ENCODE measurements at regions of chr11 and their contacts with region 1.

Region 1: GRCh38 chr11:117327567-117328374 is at the start of gene CEP164:
- DNase-seq: peak; percentile 97
- H3K4me3 Mint-ChIP-seq: no peak within 1 kb of the TSS
- H3K27ac Mint-ChIP-seq: no peak within 1 kb of the TSS
- H3K4me1 Mint-ChIP-seq: peaks cover 7% of the 10 kb centered on the region
- H3K27me3 Mint-ChIP-seq: no peaks in the 10 kb centered on the region
- CTCF ChIP-seq: no peak
- total RNA-seq, gene CEP164: 47.4 and 49.9 TPM in 2 replicates

Region 2: DNA sequence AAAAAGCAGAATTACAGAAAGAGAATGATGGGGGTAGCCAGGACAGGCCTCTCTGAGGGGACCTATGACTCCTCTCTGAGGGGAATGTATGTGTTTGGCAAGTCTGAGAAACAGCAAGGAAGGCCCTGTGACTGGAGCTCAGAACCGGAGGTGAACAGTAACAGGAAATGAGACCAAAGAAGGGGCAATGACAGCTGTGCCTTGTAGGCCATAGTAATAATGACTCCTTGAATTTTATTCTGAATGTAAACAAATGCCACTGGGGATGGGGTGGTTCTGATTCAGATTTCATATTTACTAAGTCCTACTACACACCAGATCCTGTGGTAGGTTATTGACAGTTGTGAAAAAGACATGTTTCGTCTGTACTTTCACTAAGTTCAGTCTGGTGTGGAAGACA is 437.6 kb before region 1 on chr11:
- CTCF ChIA-PET with region 1: no interaction called
- POLR2A ChIA-PET with region 1: no interaction called
- intact Hi-C with region 1: no loop called
- DNase-seq: no peak
- H3K4me3 Mint-ChIP-seq: no peak overlapping the region
- H3K27ac Mint-ChIP-seq: no peak overlapping the region
- H3K4me1 Mint-ChIP-seq: no peaks in the 10 kb centered on the region
- H3K27me3 Mint-ChIP-seq: no peaks in the 10 kb centered on the region
- CTCF ChIP-seq: no peak

Region 3: DNA sequence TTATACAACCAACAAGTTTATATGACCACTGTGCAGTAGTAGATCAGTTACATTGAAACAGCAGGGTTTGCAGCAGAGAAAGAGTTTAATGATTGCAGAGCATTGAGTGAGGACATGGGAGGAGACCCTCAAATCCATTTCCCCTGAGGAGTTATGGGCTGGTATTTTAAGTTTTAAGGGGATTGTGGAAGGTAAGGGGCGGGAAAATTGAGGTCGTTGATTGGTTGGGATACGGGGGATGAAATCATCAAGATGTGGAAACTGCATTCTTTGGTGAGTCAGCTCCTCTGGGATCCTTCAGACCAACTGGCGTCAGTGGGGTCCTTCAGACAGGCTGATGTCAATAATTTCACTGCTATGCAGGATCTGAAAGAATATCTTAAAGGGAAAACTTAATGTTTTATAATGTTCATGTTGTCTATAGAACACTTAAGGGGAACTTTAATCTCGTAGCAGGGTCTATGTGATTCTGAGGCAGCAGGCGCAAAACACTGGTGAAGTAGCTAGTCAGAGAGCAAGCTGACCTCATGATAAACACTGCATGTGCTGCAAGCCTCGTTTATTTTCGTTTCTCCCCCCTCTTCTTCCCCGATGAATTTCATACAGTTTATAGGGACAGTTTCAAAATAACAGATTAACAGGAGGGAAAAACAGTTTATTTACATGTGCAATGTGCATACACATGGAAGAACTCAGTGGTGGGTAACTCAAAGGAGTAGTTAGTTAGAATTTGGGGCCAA is 54.1 kb before region 1 on chr11:
- CTCF ChIA-PET with region 1: no interaction called
- POLR2A ChIA-PET with region 1: no interaction called
- intact Hi-C with region 1: no loop called
- DNase-seq: peak; percentile 79
- H3K4me3 Mint-ChIP-seq: no peak overlapping the region
- H3K27ac Mint-ChIP-seq: no peak overlapping the region
- H3K4me1 Mint-ChIP-seq: peaks cover 11% of the 10 kb centered on the region
- H3K27me3 Mint-ChIP-seq: no peaks in the 10 kb centered on the region
- CTCF ChIP-seq: no peak

Region 4: DNA sequence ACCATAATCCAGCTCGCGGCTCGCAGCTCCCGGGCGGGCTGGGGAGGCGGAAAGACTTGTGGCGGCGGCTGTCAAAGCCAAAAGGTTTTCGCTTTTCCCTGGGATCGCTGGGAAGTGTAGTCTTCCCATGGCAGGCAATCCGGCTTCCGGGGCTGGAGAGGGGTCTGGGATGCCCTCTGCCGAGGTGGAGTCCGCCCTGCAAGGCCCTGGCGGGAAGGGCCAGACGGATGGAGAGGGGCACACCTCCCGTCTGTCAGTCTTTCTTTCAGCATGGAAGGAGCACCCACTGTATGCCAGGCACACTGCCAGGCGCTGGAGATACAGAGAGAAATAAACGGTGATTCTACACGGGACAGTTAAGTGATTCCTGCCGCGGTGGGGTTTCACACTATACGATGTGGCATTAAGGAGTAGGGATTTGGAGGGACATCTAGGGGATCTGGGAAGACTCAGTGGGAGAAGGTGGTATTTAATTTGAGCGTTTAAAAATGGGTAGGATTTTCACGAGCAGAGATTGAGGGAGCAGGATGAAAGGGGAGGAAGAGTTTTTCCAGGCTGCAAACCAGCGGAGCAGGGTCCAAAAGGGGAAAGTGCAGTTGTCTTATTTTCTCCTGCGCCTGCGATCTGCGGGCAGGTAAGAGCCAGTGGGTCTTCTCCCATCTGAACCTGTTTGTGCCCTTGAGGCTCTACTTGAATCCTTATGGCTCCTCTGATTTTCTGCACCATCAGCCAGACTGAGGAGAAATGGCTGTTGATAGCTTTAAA is 11.4 kb before region 1 on chr11 and contains the start of gene BACE1:
- CTCF ChIA-PET with region 1: interaction called, 4 read pairs
- POLR2A ChIA-PET with region 1: interaction called, 25 read pairs
- intact Hi-C with region 1: no loop called
- DNase-seq: peak; percentile 85
- H3K4me3 Mint-ChIP-seq: peak within 1 kb of the TSS; percentile 83
- H3K27ac Mint-ChIP-seq: peak within 1 kb of the TSS; percentile 23
- H3K4me1 Mint-ChIP-seq: peaks cover 13% of the 10 kb centered on the region
- H3K27me3 Mint-ChIP-seq: no peaks in the 10 kb centered on the region
- CTCF ChIP-seq: no peak
- total RNA-seq, gene BACE1: 15.8 and 18.1 TPM in 2 replicates

Measured in MCF 10A (cell line).